ENCODE measurements at regions of chr7 and their contacts with region 1.

Region 1: DNA sequence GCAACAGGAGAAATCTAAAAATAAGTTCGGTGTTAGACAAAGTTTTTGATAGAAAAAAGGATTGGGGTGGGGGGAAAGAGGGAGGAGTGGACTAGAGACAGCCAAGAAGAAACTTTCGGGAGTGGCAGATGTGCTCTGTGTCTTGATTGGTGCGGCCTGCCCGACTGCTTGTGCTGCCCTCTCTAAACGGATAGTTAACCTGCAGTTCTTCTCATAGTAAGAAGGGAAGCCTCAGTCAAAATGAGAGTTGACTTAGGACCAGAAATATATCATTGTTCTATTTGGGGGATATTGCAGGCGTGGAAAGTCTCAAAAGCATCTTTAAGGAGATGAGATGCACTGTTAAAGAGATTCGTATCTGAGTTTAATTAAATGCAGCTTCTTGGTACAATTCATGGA is 39.3 kb downstream of the UBE3C start:
- DNase-seq: no peak
- H3K4me3 ChIP-seq: no peak overlapping the region
- H3K27ac ChIP-seq: no peak overlapping the region
- H3K4me1 ChIP-seq: no peaks in the 10 kb centered on the region
- CTCF ChIP-seq: no peak

Region 2: GRCh38 chr7:157193274-157193673 is 15.3 kb after region 1 on chr7:
- CTCF ChIA-PET with region 1: no interaction called
- POLR2A ChIA-PET with region 1: interaction called, 11 read pairs
- intact Hi-C with region 1: no loop called
- DNase-seq: no peak
- H3K4me3 ChIP-seq: no peak overlapping the region
- H3K27ac ChIP-seq: no peak overlapping the region
- H3K4me1 ChIP-seq: no peaks in the 10 kb centered on the region
- CTCF ChIP-seq: no peak

Region 3: DNA sequence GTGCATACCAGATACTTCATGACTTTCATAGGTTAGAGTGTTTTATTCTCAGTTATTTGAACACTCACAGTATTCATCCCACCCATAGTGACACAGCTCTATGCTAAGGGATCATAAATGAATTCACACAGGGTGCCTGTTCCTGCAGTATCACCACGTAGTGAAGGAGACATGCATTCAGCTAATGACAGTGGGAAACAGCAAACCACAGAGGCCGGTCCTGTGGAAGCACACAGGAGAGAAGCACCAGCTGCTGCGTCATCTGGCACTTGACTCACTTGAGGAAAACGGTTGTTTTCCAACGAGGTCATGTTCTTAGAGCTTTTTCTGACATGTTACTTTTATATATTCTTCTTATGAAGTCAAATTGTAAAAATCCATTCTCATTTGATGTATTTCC is 33.7 kb after region 1 on chr7:
- CTCF ChIA-PET with region 1: no interaction called
- POLR2A ChIA-PET with region 1: interaction called, 12 read pairs
- intact Hi-C with region 1: no loop called
- DNase-seq: no peak
- H3K4me3 ChIP-seq: no peak overlapping the region
- H3K27ac ChIP-seq: no peak overlapping the region
- H3K4me1 ChIP-seq: no peaks in the 10 kb centered on the region
- CTCF ChIP-seq: no peak

Region 4: GRCh38 chr7:157253850-157254249 is 75.9 kb after region 1 on chr7:
- CTCF ChIA-PET with region 1: no interaction called
- POLR2A ChIA-PET with region 1: no interaction called
- intact Hi-C with region 1: no loop called
- DNase-seq: no peak
- H3K4me3 ChIP-seq: no peak overlapping the region
- H3K27ac ChIP-seq: no peak overlapping the region
- H3K4me1 ChIP-seq: no peaks in the 10 kb centered on the region
- CTCF ChIP-seq: no peak